ENCODE measurements at regions of chr10 and their contacts with region 1.

Region 1: DNA sequence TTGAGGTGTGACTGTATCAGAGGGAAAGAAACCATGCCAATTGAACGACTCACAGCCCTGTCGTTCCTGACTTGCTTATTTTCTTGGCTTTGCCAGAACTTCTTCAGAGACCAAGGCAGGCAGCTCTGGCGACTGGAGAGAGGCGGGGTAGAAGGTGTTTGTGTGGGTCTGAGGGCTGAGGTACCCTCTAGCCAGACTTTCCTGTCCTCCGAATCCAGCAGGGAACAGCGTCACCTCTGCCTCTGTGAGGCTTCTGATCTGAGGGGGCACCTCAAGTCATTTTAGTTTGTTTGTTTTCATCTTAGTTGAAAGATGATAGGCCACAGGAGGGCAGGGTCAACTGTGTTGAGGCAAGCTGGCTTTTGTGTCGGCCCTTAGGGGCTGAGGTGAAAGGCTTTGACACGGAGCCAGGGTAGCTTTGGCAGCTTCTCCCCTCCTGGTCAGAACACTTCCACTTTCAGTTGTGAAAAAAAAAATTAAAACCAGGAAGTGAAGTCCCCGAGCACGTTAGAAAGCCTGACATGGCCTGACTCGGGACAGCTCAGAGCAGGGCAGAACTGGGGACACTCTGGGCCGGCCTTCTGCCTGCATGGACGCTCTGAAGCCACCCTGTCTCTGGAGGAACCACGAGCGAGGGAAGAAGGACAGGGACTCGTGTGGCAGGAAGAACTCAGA is 1.9 kb downstream of the ACSL5 start:
- H3K4me3 Mint-ChIP-seq: peak overlapping the region; percentile 89
- H3K27ac Mint-ChIP-seq: peak overlapping the region; percentile 97
- H3K4me1 Mint-ChIP-seq: peaks cover 69% of the 10 kb centered on the region
- H3K27me3 Mint-ChIP-seq: peaks cover 3% of the 10 kb centered on the region

Region 2: GRCh38 chr10:112140110-112140970 is 235.5 kb before region 1 on chr10:
- intact Hi-C with region 1: no loop called
- H3K4me3 Mint-ChIP-seq: no peak overlapping the region
- H3K27ac Mint-ChIP-seq: no peak overlapping the region
- H3K4me1 Mint-ChIP-seq: no peaks in the 10 kb centered on the region
- H3K27me3 Mint-ChIP-seq: peaks cover 3% of the 10 kb centered on the region

Region 3: GRCh38 chr10:112389147-112389822 is 13.4 kb after region 1 on chr10:
- intact Hi-C with region 1: loop called (anchors 1 kb)
- H3K4me3 Mint-ChIP-seq: no peak overlapping the region
- H3K27ac Mint-ChIP-seq: peak overlapping the region; percentile 52
- H3K4me1 Mint-ChIP-seq: peaks cover 34% of the 10 kb centered on the region
- H3K27me3 Mint-ChIP-seq: no peaks in the 10 kb centered on the region

Region 4: DNA sequence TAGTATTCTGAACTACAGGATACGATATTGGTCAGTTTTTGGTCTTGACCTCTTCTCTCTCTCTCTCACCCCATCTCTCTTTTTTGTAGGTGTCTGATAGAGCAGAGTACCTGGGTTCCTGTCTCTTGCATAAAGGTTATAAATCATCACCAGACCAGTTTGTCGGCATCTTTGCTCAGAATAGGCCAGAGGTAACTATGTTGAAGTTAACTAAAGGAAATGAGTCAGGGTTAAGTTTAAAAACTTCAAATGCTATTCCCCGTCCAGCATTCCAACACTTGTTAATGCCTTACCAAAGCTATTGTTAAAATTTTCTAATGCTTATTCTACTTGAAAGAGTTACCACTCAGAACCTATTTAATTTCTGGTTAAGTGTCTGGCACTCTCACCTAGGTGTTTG is 28.8 kb after region 1 on chr10:
- intact Hi-C with region 1: no loop called
- H3K4me3 Mint-ChIP-seq: no peak overlapping the region
- H3K27ac Mint-ChIP-seq: no peak overlapping the region
- H3K4me1 Mint-ChIP-seq: no peaks in the 10 kb centered on the region
- H3K27me3 Mint-ChIP-seq: no peaks in the 10 kb centered on the region

Region 5: GRCh38 chr10:112434988-112435619 is 59.2 kb after region 1 on chr10:
- intact Hi-C with region 1: loop called (anchors 10 kb)
- H3K4me3 Mint-ChIP-seq: no peak overlapping the region
- H3K27ac Mint-ChIP-seq: no peak overlapping the region
- H3K4me1 Mint-ChIP-seq: peaks cover 4% of the 10 kb centered on the region
- H3K27me3 Mint-ChIP-seq: no peaks in the 10 kb centered on the region

Region 6: DNA sequence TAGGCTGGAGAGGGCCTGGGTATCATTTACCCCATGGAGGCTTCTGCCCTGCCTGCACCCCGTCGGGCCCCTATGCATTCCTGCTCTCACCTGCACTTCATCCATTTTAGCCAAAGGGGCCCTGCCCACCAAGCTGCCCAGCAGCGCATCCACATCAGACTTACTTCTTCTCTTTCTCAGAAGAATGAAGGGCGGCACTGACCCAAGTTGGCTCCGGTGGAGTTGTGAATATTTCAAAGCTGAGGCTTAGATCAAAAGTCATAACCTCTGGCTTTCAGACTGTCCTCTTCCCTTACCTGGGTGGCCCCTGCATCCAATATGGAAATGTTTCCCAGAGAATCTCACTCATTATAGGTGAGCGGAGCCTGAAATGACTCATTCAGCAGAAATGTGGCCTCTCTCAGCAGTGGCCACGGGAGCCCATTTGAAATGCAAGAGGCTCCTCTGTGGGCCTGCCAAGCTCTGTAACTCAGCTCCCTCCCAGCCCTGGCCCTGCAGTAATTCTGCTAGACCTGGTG is 456.6 kb after region 1 on chr10:
- intact Hi-C with region 1: no loop called
- H3K4me3 Mint-ChIP-seq: no peak overlapping the region
- H3K27ac Mint-ChIP-seq: no peak overlapping the region
- H3K4me1 Mint-ChIP-seq: peaks cover 28% of the 10 kb centered on the region
- H3K27me3 Mint-ChIP-seq: peaks cover 62% of the 10 kb centered on the region